Mammary epithelial cell (primary cell): ENCODE measurements at regions of chr12 and their contacts with region 1.

Region 1: DNA sequence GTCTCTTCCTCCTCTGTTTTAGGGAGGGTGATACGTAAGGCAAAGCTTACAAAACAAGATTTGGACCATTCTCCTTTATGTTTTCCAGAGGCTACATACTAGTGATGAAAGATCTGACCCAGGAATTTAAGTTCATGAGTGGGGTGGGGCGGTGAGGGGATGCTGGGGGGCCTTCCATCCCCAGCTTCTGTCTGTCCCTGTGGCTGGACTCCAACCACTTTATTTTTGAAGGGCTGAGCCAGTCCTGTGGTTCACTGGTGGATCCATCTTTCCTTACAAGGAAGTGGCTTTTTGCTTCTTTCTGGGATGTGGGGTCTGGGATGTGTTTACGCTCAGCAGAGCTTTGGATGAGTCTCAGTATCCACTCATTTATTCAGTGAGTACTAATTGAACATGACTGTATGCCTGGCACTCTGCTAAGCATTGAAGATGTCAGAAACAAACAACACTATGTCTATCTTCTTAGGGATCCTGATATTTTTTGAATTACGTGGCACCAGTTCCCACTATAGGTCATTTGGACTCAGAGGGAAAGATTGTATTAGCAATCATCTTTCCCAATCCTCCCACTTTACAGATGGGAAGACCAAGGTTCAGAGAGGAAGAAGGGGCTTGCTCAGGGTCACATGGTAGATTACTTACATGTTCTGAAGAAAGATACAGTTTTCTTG is 291.8 kb upstream of the TBX3 start:
- DNase-seq: no peak
- H3K4me3 ChIP-seq: no peak overlapping the region
- H3K27ac ChIP-seq: no peak overlapping the region
- H3K4me1 ChIP-seq: peaks cover 6% of the 10 kb centered on the region
- H3K27me3 ChIP-seq: no peaks in the 10 kb centered on the region
- CTCF ChIP-seq: no peak

Region 2: GRCh38 chr12:114954511-114955055 is 21.2 kb before region 1 on chr12:
- CTCF ChIA-PET with region 1: interaction called, 17 read pairs
- dilution Hi-C with region 1: no loop called
- in situ Hi-C with region 1: no loop called
- intact Hi-C with region 1: no loop called
- DNase-seq: peak; percentile 5
- H3K4me3 ChIP-seq: no peak overlapping the region
- H3K27ac ChIP-seq: no peak overlapping the region
- H3K4me1 ChIP-seq: no peaks in the 10 kb centered on the region
- H3K27me3 ChIP-seq: peaks cover 3% of the 10 kb centered on the region
- CTCF ChIP-seq: no peak